ENCODE measurements at regions of chrX and their contacts with region 1.

Region 1: GRCh38 chrX:10167573-10167972 is 10.8 kb downstream of the CLCN4 start:
- DNase-seq: no peak
- ATAC-seq: no peak
- H3K4me3 ChIP-seq: no peak overlapping the region
- H3K27ac ChIP-seq: no peak overlapping the region
- H3K4me1 ChIP-seq: peaks cover 35% of the 10 kb centered on the region
- H3K27me3 ChIP-seq: no peaks in the 10 kb centered on the region
- CTCF ChIP-seq: no peak
- EP300 ChIP-seq: no peak
- POLR2A ChIP-seq: no peak
- RAD21 ChIP-seq: no peak

Region 2: DNA sequence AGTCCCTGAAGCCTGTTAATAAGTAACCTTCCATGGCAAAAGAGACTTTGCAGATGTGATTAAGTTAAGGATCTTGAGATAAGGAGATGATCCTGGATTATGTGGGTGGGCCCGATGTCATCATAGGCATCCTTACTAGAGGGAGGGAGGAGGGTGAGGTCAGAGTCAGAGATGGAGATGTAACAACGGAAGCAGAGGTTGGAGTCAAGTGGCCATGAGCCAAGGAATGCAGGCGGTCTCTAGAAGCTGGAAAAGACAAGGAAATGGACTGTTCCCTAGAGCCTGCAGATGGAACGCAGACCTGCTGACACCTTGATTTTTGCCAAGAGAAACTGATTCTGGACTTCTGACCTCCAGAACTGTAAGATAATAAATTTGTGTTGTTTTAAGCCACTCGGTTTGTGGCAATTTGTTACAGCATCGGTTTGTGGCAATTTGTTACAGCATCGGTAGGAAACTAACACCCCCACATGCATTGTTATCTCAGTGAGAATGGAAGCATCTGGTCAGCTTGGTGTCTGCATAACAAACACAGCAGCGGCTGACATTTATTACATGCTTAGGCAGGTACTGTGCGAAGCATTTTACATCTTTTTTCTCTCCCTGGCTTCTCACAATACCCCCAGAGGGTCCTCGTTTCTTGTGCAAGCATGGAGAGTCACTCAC is 144.9 kb before region 1 on chrX:
- CTCF ChIA-PET with region 1: no interaction called
- POLR2A ChIA-PET with region 1: no interaction called
- in situ Hi-C with region 1: no loop called
- intact Hi-C with region 1: no loop called
- DNase-seq: no peak
- ATAC-seq: no peak
- H3K4me3 ChIP-seq: no peak overlapping the region
- H3K27ac ChIP-seq: no peak overlapping the region
- H3K4me1 ChIP-seq: peaks cover 43% of the 10 kb centered on the region
- H3K27me3 ChIP-seq: no peaks in the 10 kb centered on the region
- CTCF ChIP-seq: no peak
- EP300 ChIP-seq: 0 out of 4 replicates have a peak, but pooled peaks of 1 of the 2 experiments have one; percentile 14
- POLR2A ChIP-seq: no peak
- RAD21 ChIP-seq: no peak

Region 3: GRCh38 chrX:10156199-10157031 is 11.2 kb before region 1 on chrX and contains the start of gene CLCN4:
- CTCF ChIA-PET with region 1: no interaction called
- POLR2A ChIA-PET with region 1: interaction called, 15 read pairs
- in situ Hi-C with region 1: no loop called
- intact Hi-C with region 1: no loop called
- DNase-seq: peak; percentile 67
- ATAC-seq: peak; percentile 99
- H3K4me3 ChIP-seq: peak within 1 kb of the TSS; percentile 62 to 70 (median 66)
- H3K27ac ChIP-seq: peak within 1 kb of the TSS; percentile 85
- H3K4me1 ChIP-seq: peaks cover 30% of the 10 kb centered on the region
- H3K27me3 ChIP-seq: no peaks in the 10 kb centered on the region
- CTCF ChIP-seq: no peak
- EP300 ChIP-seq: no peak
- POLR2A ChIP-seq: peak; percentile 74 to 76
- RAD21 ChIP-seq: no peak
- total RNA-seq, gene CLCN4: 2.5 and 2.6 TPM in 2 replicates

Region 4: GRCh38 chrX:10189317-10190268 is 22.0 kb after region 1 on chrX:
- CTCF ChIA-PET with region 1: no interaction called
- POLR2A ChIA-PET with region 1: no interaction called
- in situ Hi-C with region 1: no loop called
- intact Hi-C with region 1: no loop called
- DNase-seq: peak; percentile 57
- ATAC-seq: peak; percentile 94
- H3K4me3 ChIP-seq: no peak overlapping the region; a peak in 1 of 6 replicates
- H3K27ac ChIP-seq: peak overlapping the region; percentile 76
- H3K4me1 ChIP-seq: peaks cover 10% of the 10 kb centered on the region
- H3K27me3 ChIP-seq: no peaks in the 10 kb centered on the region
- CTCF ChIP-seq: peak; percentile 89
- EP300 ChIP-seq: no peak
- POLR2A ChIP-seq: no peak
- RAD21 ChIP-seq: peak; percentile 62; the same call in 1 of the 2 replicates

Measured in HepG2 (cell line).